Tibial artery (tissue), 4 donors: ENCODE measurements at regions of chr20 and their contacts with region 1.

Region 1: GRCh38 chr20:48722737-48723191 is 105.0 kb downstream of the PREX1 start:
- DNase-seq: peak; percentile 71 to 90
- H3K4me3 ChIP-seq: peak overlapping the region in 1 of 2 donors; percentile 22
- H3K27ac ChIP-seq: peak overlapping the region; percentile 88 to 89
- H3K4me1 ChIP-seq: peaks cover 6 to 84% (median 59%) of the 10 kb centered on the region in 4 donors
- H3K27me3 ChIP-seq: no peaks in the 10 kb centered on the region
- CTCF ChIP-seq: peak; percentile 39 to 40

Region 2: GRCh38 chr20:48657475-48658470 is 65.0 kb before region 1 on chr20:
- intact Hi-C with region 1: loop called (anchors 1 kb)
- DNase-seq: peak; percentile 73 to 83
- H3K4me3 ChIP-seq: no peak overlapping the region
- H3K27ac ChIP-seq: peak overlapping the region; percentile 30 to 59
- H3K4me1 ChIP-seq: peaks cover 0 to 52% (median 34%) of the 10 kb centered on the region in 4 donors
- H3K27me3 ChIP-seq: no peaks in the 10 kb centered on the region
- CTCF ChIP-seq: peak; percentile 95 to 96

Region 3: GRCh38 chr20:48828022-48828743 is 105.4 kb after region 1 on chr20:
- intact Hi-C with region 1: loop called (anchors 5 kb)
- DNase-seq: peak; percentile 70 to 85
- H3K4me3 ChIP-seq: peak overlapping the region; percentile 67 to 85
- H3K27ac ChIP-seq: peak overlapping the region; percentile 57 to 71
- H3K4me1 ChIP-seq: peaks cover 0 to 60% (median 31%) of the 10 kb centered on the region in 4 donors
- H3K27me3 ChIP-seq: no peaks in the 10 kb centered on the region
- CTCF ChIP-seq: peak; percentile 18 to 61